ENCODE measurements at regions of chr11 and their contacts with region 1.

Region 1: GRCh38 chr11:10808553-10809372 is at the start of gene EIF4G2:
- DNase-seq: peak; percentile 99
- H3K4me3 ChIP-seq: peak within 1 kb of the TSS; percentile 73 to 81
- H3K27ac ChIP-seq: peak within 1 kb of the TSS; percentile 94 to 97
- H3K4me1 ChIP-seq: peaks cover 10% of the 10 kb centered on the region
- H3K27me3 ChIP-seq: no peaks in the 10 kb centered on the region
- CTCF ChIP-seq: peak in 1 of 4 experiments; percentile 37
- POLR2A ChIP-seq: peak; percentile 99
- total RNA-seq, gene EIF4G2: 382 to 500 TPM

Region 2: GRCh38 chr11:10933455-10934292 is 124.9 kb after region 1 on chr11:
- intact Hi-C with region 1: loop called (anchors 2 kb)
- DNase-seq: peak; percentile 91
- H3K4me3 ChIP-seq: peak overlapping the region; percentile 19 to 34
- H3K27ac ChIP-seq: peak overlapping the region; percentile 81 to 84
- H3K4me1 ChIP-seq: no peaks in the 10 kb centered on the region
- H3K27me3 ChIP-seq: no peaks in the 10 kb centered on the region
- CTCF ChIP-seq: peak; percentile 88 to 98 (median 96)
- POLR2A ChIP-seq: peak; percentile 32

Measured in prostate gland (tissue), 2 donors.